PC-9 (cell line): ENCODE measurements at regions of chr7 and their contacts with region 1.

Region 1: GRCh38 chr7:80324032-80324431 is 187.8 kb downstream of the GNAT3 start:
- DNase-seq: peak; percentile 59 to 74
- H3K4me3 ChIP-seq: no peak overlapping the region
- H3K27ac ChIP-seq: no peak overlapping the region
- H3K4me1 ChIP-seq: no peaks in the 10 kb centered on the region
- H3K27me3 ChIP-seq: no peaks in the 10 kb centered on the region
- CTCF ChIP-seq: no peak

Region 2: DNA sequence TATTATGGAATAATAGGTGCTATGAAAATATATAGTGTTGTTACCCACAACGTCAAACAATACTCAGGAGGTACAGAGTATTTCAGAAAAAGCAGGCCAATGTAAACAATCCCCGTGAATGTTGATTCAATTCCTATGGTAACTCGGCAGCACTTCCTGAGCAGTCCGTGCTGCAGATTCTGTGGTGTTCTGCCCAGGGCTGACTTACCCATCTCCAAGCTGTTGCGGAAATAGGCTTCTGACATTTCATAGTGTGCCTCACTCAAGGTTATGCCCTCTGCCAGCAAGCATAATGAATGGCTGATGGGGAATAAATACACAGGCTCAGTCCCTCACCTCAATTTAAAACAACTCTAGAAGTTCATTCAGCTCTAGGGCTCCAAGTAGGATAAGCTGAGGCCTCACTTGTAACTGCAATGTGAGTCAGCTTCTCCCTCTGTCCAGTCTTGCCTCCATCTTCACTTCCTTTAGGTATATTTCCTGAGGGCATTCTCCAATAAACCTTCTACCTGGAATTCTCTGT is 11.8 kb before region 1 on chr7:
- CTCF ChIA-PET with region 1: no interaction called
- POLR2A ChIA-PET with region 1: no interaction called
- intact Hi-C with region 1: loop called (anchors 1 kb)
- DNase-seq: peak in 1 of 2 experiments; percentile 58
- H3K4me3 ChIP-seq: no peak overlapping the region
- H3K27ac ChIP-seq: no peak overlapping the region
- H3K4me1 ChIP-seq: peaks cover 10% of the 10 kb centered on the region; the same call in 1 of the 2 replicates
- H3K27me3 ChIP-seq: no peaks in the 10 kb centered on the region
- CTCF ChIP-seq: no peak

Region 3: GRCh38 chr7:80335511-80336231 is 11.6 kb after region 1 on chr7:
- CTCF ChIA-PET with region 1: no interaction called
- POLR2A ChIA-PET with region 1: no interaction called
- intact Hi-C with region 1: no loop called
- DNase-seq: no peak
- H3K4me3 ChIP-seq: no peak overlapping the region
- H3K27ac ChIP-seq: no peak overlapping the region
- H3K4me1 ChIP-seq: no peaks in the 10 kb centered on the region
- H3K27me3 ChIP-seq: no peaks in the 10 kb centered on the region
- CTCF ChIP-seq: no peak